ENCODE measurements at regions of chr2 and their contacts with region 1.

Region 1: DNA sequence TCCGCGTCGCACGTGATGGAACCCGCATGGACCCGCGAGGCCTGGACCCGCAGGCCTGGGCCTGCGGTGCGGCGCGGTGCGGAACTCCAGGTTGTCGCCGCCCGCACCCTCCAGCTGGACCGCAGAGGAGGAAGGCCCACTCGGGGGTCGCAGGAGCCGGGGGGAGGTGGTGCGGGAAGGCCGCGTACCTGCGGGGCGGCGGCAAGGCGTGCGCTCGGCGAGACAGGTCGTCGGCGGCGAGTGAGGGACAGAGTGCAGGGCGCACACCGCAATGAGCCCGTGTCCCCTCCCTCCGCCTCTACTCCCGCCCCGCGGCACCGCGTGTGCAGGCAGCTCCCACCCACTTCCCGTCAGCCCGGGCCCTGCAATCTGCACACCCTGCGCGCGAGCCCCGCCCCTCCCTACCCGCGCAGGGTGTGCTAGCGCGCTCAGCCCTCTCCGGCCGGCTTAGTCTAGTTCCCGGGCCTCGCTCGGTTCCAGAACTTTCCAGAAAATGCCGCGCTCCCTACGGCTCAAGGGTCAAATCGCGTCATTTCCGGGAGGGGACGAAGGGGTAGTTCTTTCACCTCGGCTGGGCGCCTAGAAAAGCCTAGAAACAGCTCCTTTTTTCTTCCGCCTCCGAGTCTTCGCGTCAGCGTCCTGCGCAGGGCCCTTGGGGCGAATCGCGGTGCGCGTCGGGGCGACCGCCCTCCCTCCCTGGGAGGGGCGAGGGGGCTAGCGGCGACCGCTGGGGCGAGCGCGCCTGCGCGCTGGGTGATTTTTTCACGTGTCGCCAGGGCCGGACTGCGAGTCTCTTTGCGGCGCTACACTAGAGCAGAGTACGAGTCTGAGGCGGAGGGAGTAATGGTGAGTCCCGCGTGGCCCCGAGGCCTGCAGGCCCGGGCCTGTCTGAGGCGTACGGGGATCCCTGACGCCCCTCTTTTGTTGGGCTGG is at the starts of genes HSPD1 and HSPE1:
- DNase-seq: peak; percentile 81 to 97 (median 87)
- ATAC-seq: peak; percentile 92
- H3K4me3 ChIP-seq: peak within 1 kb of the TSS; percentile 74
- H3K27ac ChIP-seq: peak within 1 kb of the TSS; percentile 95
- H3K4me1 ChIP-seq: peaks cover 10 to 17% of the 10 kb centered on the region in 2 experiments; a peak in 4 of 5 replicates
- H3K27me3 ChIP-seq: no peaks in the 10 kb centered on the region
- CTCF ChIP-seq: 0 out of 6 replicates have a peak, but pooled peaks of 2 of the 3 experiments have one; percentile 0 to 3
- EP300 ChIP-seq: peak; percentile 70
- POLR2A ChIP-seq: peak; percentile 87
- RAD21 ChIP-seq: no peak; a peak in 1 of 4 replicates
- polyA plus RNA-seq, gene HSPD1: 622 to 1,014 TPM
- polyA plus RNA-seq, gene HSPE1: 880 to 1,007 TPM

Region 2: GRCh38 chr2:197434541-197435513 is 65.0 kb before region 1 on chr2 and contains the start of gene SF3B1:
- CTCF ChIA-PET with region 1: no interaction called
- POLR2A ChIA-PET with region 1: interaction called, 8 read pairs
- in situ Hi-C with region 1: no loop called
- intact Hi-C with region 1: loop called (anchors 1 kb)
- DNase-seq: peak; percentile 88 to 97 (median 90)
- ATAC-seq: peak; percentile 89
- H3K4me3 ChIP-seq: peak within 1 kb of the TSS; percentile 77
- H3K27ac ChIP-seq: peak within 1 kb of the TSS; percentile 98
- H3K4me1 ChIP-seq: peaks cover 14 to 17% of the 10 kb centered on the region in 2 experiments; a peak in 4 of 5 replicates
- H3K27me3 ChIP-seq: no peaks in the 10 kb centered on the region
- CTCF ChIP-seq: no peak
- EP300 ChIP-seq: 0 out of 2 replicates have a peak, but pooled peaks have one; percentile 7
- POLR2A ChIP-seq: peak; percentile 89
- RAD21 ChIP-seq: no peak
- polyA plus RNA-seq, gene SF3B1: 125 to 177 TPM

Region 3: GRCh38 chr2:197480165-197481036 is 19.5 kb before region 1 on chr2:
- CTCF ChIA-PET with region 1: no interaction called
- POLR2A ChIA-PET with region 1: interaction called, 10 read pairs
- in situ Hi-C with region 1: no loop called
- intact Hi-C with region 1: no loop called
- DNase-seq: no peak
- ATAC-seq: no peak
- H3K4me3 ChIP-seq: no peak overlapping the region
- H3K27ac ChIP-seq: no peak overlapping the region
- H3K4me1 ChIP-seq: peaks cover 4 to 20% of the 10 kb centered on the region in 2 experiments; a peak in 3 of 5 replicates
- H3K27me3 ChIP-seq: no peaks in the 10 kb centered on the region
- CTCF ChIP-seq: no peak
- EP300 ChIP-seq: no peak
- POLR2A ChIP-seq: no peak
- RAD21 ChIP-seq: no peak

Region 4: GRCh38 chr2:197599285-197599965 is 99.6 kb after region 1 on chr2:
- CTCF ChIA-PET with region 1: no interaction called
- POLR2A ChIA-PET with region 1: interaction called, 3 read pairs
- in situ Hi-C with region 1: no loop called
- intact Hi-C with region 1: loop called (anchors 5 kb)
- DNase-seq: peak; percentile 12 to 58 (median 32)
- ATAC-seq: peak; percentile 97
- H3K4me3 ChIP-seq: no peak overlapping the region
- H3K27ac ChIP-seq: no peak overlapping the region
- H3K4me1 ChIP-seq: peaks cover 0 to 5% of the 10 kb centered on the region in 2 experiments; a peak in 1 of 5 replicates
- H3K27me3 ChIP-seq: no peaks in the 10 kb centered on the region; a peak in 1 of 5 replicates
- CTCF ChIP-seq: peak; percentile 15 to 44 (median 42); a peak in 4 of 6 replicates
- EP300 ChIP-seq: no peak
- POLR2A ChIP-seq: no peak
- RAD21 ChIP-seq: peak in 1 of 2 experiments; percentile 34; a peak in 1 of 4 replicates

Measured in K562 (cell line).